ENCODE measurements at regions of chr11 and their contacts with region 1.

Region 1: DNA sequence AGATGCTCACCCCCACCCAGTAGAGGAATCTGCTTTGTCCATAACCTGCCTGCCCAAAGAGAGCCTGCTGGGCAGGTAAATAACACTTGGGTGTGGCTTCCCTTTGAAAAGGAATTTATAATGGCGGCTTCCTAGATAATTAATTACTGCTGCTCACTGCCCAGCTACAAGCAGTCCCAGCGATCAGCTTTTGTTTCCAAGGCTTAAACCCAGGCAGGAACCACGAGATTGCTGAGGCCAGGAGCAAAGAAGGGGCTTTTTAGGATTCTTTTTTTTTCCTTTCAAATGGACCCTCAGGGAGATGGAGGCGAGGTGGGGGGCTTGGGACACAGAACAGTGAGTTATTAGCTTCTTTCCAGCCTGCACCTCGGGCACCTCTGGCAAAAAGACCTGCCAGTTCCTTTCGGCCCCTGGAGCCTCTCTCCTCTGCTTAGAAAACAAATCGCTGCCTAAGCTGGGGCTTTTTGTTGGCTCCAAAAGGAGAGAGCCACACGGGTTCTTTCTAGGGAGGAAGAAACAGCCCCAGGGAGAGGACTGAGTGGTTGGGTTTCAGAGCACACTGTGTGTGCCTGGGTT is 107.2 kb downstream of the TSPAN18 start:
- DNase-seq: no peak
- H3K4me3 ChIP-seq: no peak overlapping the region
- H3K27ac ChIP-seq: no peak overlapping the region
- H3K4me1 ChIP-seq: no peaks in the 10 kb centered on the region
- H3K27me3 ChIP-seq: peaks cover 10% of the 10 kb centered on the region
- CTCF ChIP-seq: no peak

Region 2: DNA sequence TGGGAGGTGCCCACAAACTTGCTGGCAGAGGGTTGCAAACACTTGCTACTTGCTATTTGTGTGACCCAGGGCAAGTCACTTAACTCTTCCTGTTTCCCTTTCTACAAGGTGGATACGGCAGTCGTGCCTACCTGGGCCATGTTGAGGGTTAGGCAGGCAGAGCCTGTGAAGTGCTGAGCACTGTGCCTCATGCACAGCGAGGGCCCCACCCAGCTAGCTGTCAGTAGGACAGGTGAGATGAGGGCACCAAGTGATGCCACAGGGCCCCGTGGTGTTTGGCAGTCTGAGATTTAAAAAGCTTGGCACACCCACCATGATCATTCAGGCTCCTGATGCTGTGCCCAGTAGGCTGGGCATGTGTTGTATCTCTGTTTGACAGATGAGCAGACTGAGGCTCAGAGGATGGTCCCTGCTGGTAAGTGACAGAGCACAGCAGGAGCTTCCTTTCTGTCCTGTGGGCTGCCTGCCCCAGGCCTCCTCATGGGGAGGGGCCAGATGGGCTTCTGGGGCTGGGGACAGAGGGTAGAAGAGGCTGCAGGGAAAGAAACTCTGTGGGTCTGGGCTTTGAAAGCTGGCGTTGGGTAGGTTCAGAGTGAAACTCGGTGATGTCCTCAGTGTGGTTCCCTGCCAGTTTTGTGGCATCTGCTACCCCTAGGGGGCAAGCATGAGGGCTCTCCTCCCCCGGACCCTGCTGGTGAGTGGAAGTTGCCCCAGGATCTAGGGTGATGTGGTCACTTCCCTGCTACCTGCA is 47.9 kb before region 1 on chr11:
- CTCF ChIA-PET with region 1: no interaction called
- dilution Hi-C with region 1: loop called (anchors 5 kb)
- in situ Hi-C with region 1: no loop called
- intact Hi-C with region 1: no loop called
- DNase-seq: no peak
- H3K4me3 ChIP-seq: no peak overlapping the region
- H3K27ac ChIP-seq: no peak overlapping the region
- H3K4me1 ChIP-seq: no peaks in the 10 kb centered on the region
- H3K27me3 ChIP-seq: peaks cover 1% of the 10 kb centered on the region
- CTCF ChIP-seq: no peak

Measured in mammary epithelial cell (primary cell).